B cell (primary cell): ENCODE measurements at regions of chrX and their contacts with region 1.

Region 1: GRCh38 chrX:130060122-130061069 is 49.9 kb downstream of the ELF4 start:
- DNase-seq: peak; percentile 85
- ATAC-seq: peak; percentile 88
- H3K4me3 ChIP-seq: peak overlapping the region in 4 of 5 experiments; percentile 49 to 63 (median 56)
- H3K4me3 Mint-ChIP-seq: peak overlapping the region; percentile 82
- H3K27ac ChIP-seq: peak overlapping the region in 1 of 2 donors; percentile 54
- H3K27ac Mint-ChIP-seq: peak overlapping the region; percentile 79
- H3K4me1 ChIP-seq: peaks cover 3 to 11% of the 10 kb centered on the region in 2 donors
- H3K4me1 Mint-ChIP-seq: no peaks in the 10 kb centered on the region
- H3K27me3 ChIP-seq: no peaks in the 10 kb centered on the region
- H3K27me3 Mint-ChIP-seq: no peaks in the 10 kb centered on the region
- CTCF ChIP-seq: peak; percentile 76

Region 2: DNA sequence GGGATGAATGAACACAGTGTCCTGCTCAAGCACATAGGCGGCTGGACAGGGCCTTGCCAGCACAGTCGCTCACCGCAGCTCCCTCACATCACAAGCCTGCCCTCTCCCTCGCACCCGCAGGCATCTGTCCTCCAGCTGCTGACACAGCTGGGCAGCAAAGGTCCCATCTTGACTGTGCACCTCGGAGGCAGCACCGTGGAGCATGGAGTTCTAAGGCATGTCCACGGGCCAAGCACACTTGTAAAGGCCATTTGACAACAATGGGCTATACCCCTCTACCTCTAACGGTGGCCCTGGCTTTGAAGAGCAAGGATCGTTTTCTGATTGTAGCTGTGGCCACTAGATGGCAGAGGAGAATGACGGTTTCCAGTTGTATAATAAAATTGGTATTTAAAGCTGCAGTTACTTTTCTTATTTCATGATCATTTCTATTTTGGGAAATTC is 459.4 kb before region 1 on chrX:
- CTCF ChIA-PET with region 1: interaction called, 22 read pairs
- POLR2A ChIA-PET with region 1: no interaction called
- intact Hi-C with region 1: loop called (anchors 1 kb)
- DNase-seq: peak; percentile 37
- ATAC-seq: peak; percentile 37
- H3K4me3 ChIP-seq: no peak overlapping the region
- H3K4me3 Mint-ChIP-seq: no peak overlapping the region
- H3K27ac ChIP-seq: no peak overlapping the region
- H3K27ac Mint-ChIP-seq: no peak overlapping the region
- H3K4me1 ChIP-seq: peaks cover 8 to 15% of the 10 kb centered on the region in 2 donors
- H3K4me1 Mint-ChIP-seq: peaks cover 14% of the 10 kb centered on the region
- H3K27me3 ChIP-seq: no peaks in the 10 kb centered on the region
- H3K27me3 Mint-ChIP-seq: no peaks in the 10 kb centered on the region
- CTCF ChIP-seq: peak; percentile 67

Region 3: GRCh38 chrX:129637217-129638109 is 422.9 kb before region 1 on chrX:
- CTCF ChIA-PET with region 1: interaction called, 8 read pairs
- POLR2A ChIA-PET with region 1: no interaction called
- intact Hi-C with region 1: loop called (anchors 1 kb)
- DNase-seq: peak; percentile 77
- ATAC-seq: peak; percentile 78
- H3K4me3 ChIP-seq: no peak overlapping the region
- H3K4me3 Mint-ChIP-seq: no peak overlapping the region
- H3K27ac ChIP-seq: no peak overlapping the region
- H3K27ac Mint-ChIP-seq: no peak overlapping the region
- H3K4me1 ChIP-seq: peaks cover 0 to 5% of the 10 kb centered on the region in 2 donors
- H3K4me1 Mint-ChIP-seq: peaks cover 2% of the 10 kb centered on the region
- H3K27me3 ChIP-seq: no peaks in the 10 kb centered on the region
- H3K27me3 Mint-ChIP-seq: no peaks in the 10 kb centered on the region
- CTCF ChIP-seq: peak; percentile 78

Region 4: GRCh38 chrX:129931411-129932015 is 128.9 kb before region 1 on chrX:
- CTCF ChIA-PET with region 1: interaction called, 69 read pairs
- POLR2A ChIA-PET with region 1: no interaction called
- intact Hi-C with region 1: loop called (anchors 1 kb)
- DNase-seq: peak; percentile 89
- ATAC-seq: peak; percentile 75
- H3K4me3 ChIP-seq: peak overlapping the region in 4 of 5 experiments; percentile 65 to 72 (median 71)
- H3K4me3 Mint-ChIP-seq: peak overlapping the region; percentile 90
- H3K27ac ChIP-seq: peak overlapping the region; percentile 80 to 82
- H3K27ac Mint-ChIP-seq: peak overlapping the region; percentile 98
- H3K4me1 ChIP-seq: peaks cover 0 to 5% of the 10 kb centered on the region in 2 donors
- H3K4me1 Mint-ChIP-seq: peaks cover 8% of the 10 kb centered on the region
- H3K27me3 ChIP-seq: no peaks in the 10 kb centered on the region
- H3K27me3 Mint-ChIP-seq: no peaks in the 10 kb centered on the region
- CTCF ChIP-seq: no peak

Region 5: DNA sequence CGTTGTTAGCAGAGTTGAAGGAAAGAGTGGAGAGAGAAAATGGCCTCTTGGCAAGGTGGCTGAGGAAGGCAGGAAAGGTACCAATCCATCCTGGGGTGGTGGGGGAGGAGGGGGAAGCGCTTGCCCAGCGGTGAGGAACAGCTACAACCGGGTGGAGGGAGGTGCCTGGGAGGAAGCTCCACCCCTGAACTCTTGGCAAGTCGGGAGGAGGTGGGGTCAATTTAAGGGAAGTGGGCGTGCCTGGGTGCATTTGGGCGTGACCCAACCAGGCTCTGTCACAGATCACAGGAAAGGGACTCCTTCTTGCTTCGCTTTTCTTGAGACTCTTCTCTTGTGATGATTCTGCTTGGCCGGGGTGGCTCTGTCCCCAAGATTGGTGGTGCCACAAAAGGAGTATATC is 36.3 kb before region 1 on chrX:
- CTCF ChIA-PET with region 1: interaction called, 19 read pairs
- POLR2A ChIA-PET with region 1: no interaction called
- intact Hi-C with region 1: loop called (anchors 5 kb)
- DNase-seq: peak; percentile 90
- ATAC-seq: peak; percentile 100
- H3K4me3 ChIP-seq: peak overlapping the region in 1 of 5 experiments; percentile 13
- H3K4me3 Mint-ChIP-seq: peak overlapping the region; percentile 76
- H3K27ac ChIP-seq: peak overlapping the region; percentile 29 to 68
- H3K27ac Mint-ChIP-seq: peak overlapping the region; percentile 89
- H3K4me1 ChIP-seq: peaks cover 13 to 20% of the 10 kb centered on the region in 2 donors
- H3K4me1 Mint-ChIP-seq: peaks cover 15% of the 10 kb centered on the region
- H3K27me3 ChIP-seq: no peaks in the 10 kb centered on the region
- H3K27me3 Mint-ChIP-seq: no peaks in the 10 kb centered on the region
- CTCF ChIP-seq: no peak